Colonic mucosa (tissue), 4 donors: ENCODE measurements at regions of chr11 and their contacts with region 1.

Region 1: GRCh38 chr11:75733431-75734107 is 15.9 kb downstream of the MOGAT2 start:
- DNase-seq: no peak
- H3K4me3 ChIP-seq: no peak overlapping the region
- H3K27ac ChIP-seq: peak overlapping the region; percentile 53
- H3K4me1 ChIP-seq: peaks cover 8% of the 10 kb centered on the region
- H3K27me3 ChIP-seq: no peaks in the 10 kb centered on the region
- CTCF ChIP-seq: no peak

Region 2: GRCh38 chr11:75554258-75555022 is 179.1 kb before region 1 on chr11:
- intact Hi-C with region 1: no loop called
- DNase-seq: peak; percentile 72
- H3K4me3 ChIP-seq: no peak overlapping the region
- H3K27ac ChIP-seq: peak overlapping the region; percentile 77
- H3K4me1 ChIP-seq: no peaks in the 10 kb centered on the region
- H3K27me3 ChIP-seq: no peaks in the 10 kb centered on the region
- CTCF ChIP-seq: no peak

Region 3: GRCh38 chr11:75786101-75786736 is 52.6 kb after region 1 on chr11:
- intact Hi-C with region 1: loop called (anchors 10 kb)
- DNase-seq: peak; percentile 79
- H3K4me3 ChIP-seq: no peak overlapping the region
- H3K27ac ChIP-seq: no peak overlapping the region
- H3K4me1 ChIP-seq: no peaks in the 10 kb centered on the region
- H3K27me3 ChIP-seq: no peaks in the 10 kb centered on the region
- CTCF ChIP-seq: no peak

Region 4: GRCh38 chr11:75801355-75802022 is 67.9 kb after region 1 on chr11:
- intact Hi-C with region 1: no loop called
- DNase-seq: no peak
- H3K4me3 ChIP-seq: no peak overlapping the region
- H3K27ac ChIP-seq: no peak overlapping the region
- H3K4me1 ChIP-seq: no peaks in the 10 kb centered on the region
- H3K27me3 ChIP-seq: no peaks in the 10 kb centered on the region
- CTCF ChIP-seq: no peak